Endothelial cell of umbilical vein (primary cell): ENCODE measurements at regions of chr21 and their contacts with region 1.

Region 1: GRCh38 chr21:34745557-34746255 is 76.9 kb downstream of the CLIC6 start:
- DNase-seq: peak; percentile 74
- H3K4me3 ChIP-seq: no peak overlapping the region
- H3K27ac ChIP-seq: no peak overlapping the region
- H3K4me1 ChIP-seq: no peaks in the 10 kb centered on the region
- H3K27me3 ChIP-seq: peaks cover 11 to 23% of the 10 kb centered on the region in 2 experiments
- CTCF ChIP-seq: peak; percentile 80 to 90
- POLR2A ChIP-seq: no peak

Region 2: DNA sequence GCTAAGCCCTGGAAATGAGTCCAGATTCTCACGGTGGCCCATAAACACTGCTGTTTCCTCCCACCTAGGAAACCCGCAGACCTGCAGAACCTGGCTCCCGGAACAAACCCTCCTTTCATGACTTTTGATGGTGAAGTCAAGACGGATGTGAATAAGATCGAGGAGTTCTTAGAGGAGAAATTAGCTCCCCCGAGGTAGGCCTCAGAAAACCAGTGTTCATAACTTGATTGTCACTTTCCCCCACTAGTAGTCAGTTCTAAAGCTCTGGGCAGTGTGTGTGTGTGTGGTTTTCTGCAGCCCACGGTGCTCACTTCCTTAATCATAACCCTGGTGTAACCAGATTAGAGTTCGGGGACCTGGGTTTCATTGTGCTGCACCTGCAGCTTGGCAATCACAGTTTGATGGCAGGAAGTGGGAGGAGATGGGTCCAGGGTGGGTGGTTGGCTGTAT is 37.8 kb before region 1 on chr21:
- CTCF ChIA-PET with region 1: interaction called, 10 read pairs
- POLR2A ChIA-PET with region 1: no interaction called
- dilution Hi-C with region 1: no loop called
- intact Hi-C with region 1: no loop called
- DNase-seq: no peak
- H3K4me3 ChIP-seq: no peak overlapping the region
- H3K27ac ChIP-seq: no peak overlapping the region
- H3K4me1 ChIP-seq: no peaks in the 10 kb centered on the region
- H3K27me3 ChIP-seq: peaks cover 21 to 28% of the 10 kb centered on the region in 2 experiments
- CTCF ChIP-seq: no peak
- POLR2A ChIP-seq: no peak

Region 3: GRCh38 chr21:34807146-34807880 is 61.6 kb after region 1 on chr21:
- CTCF ChIA-PET with region 1: interaction called, 15 read pairs
- POLR2A ChIA-PET with region 1: no interaction called
- dilution Hi-C with region 1: no loop called
- intact Hi-C with region 1: no loop called
- DNase-seq: peak; percentile 94
- H3K4me3 ChIP-seq: no peak overlapping the region
- H3K27ac ChIP-seq: peak overlapping the region; percentile 100
- H3K4me1 ChIP-seq: peaks cover 37% of the 10 kb centered on the region
- H3K27me3 ChIP-seq: no peaks in the 10 kb centered on the region
- CTCF ChIP-seq: no peak
- POLR2A ChIP-seq: no peak

Region 4: DNA sequence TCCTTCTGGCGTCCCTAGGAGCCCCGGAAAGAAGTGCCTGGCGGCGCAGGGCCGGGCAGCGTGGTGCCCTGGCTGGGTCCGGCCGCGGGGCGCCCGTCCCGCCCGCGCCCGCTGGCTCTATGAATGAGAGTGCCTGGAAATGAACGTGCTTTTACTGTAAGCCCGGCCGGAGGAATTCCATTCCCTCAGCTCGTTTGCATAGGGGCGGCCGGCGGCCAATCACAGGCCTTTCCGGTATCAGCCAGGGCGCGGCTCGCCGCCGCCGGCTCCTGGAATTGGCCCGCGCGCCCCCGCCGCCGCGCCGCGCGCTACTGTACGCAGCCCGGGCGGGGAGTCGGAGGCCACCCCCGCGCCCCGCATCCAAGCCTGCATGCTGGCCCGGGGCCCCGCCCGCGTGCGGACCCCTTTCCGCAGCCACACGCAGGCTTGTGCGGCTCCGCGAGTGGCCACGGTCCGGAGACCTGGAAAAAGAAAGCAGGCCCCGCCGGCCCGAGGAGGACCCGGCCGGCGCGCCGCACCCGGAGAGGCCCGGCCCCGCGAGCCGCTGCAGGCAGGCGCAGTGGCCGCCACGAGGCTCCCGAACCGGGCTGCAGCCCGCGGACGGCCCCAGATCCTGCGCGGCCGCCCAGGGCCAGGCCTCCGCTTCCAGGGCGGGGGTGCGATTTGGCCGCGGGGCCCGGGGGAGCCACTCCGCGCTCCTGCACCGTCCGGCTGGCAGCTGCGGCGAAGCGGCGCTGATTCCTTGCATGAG is 143.0 kb after region 1 on chr21:
- CTCF ChIA-PET with region 1: interaction called, 249 read pairs
- POLR2A ChIA-PET with region 1: interaction called, 16 read pairs
- dilution Hi-C with region 1: no loop called
- intact Hi-C with region 1: loop called (anchors 1 kb)
- DNase-seq: peak; percentile 91
- H3K4me3 ChIP-seq: peak overlapping the region; percentile 59 to 89 (median 80)
- H3K27ac ChIP-seq: peak overlapping the region; percentile 88
- H3K4me1 ChIP-seq: peaks cover 36% of the 10 kb centered on the region
- H3K27me3 ChIP-seq: peaks cover 21 to 36% of the 10 kb centered on the region in 2 experiments
- CTCF ChIP-seq: no peak
- POLR2A ChIP-seq: peak; percentile 99

Region 5: GRCh38 chr21:35400233-35400957 is 654.7 kb after region 1 on chr21:
- CTCF ChIA-PET with region 1: interaction called, 44 read pairs
- POLR2A ChIA-PET with region 1: no interaction called
- dilution Hi-C with region 1: no loop called
- intact Hi-C with region 1: loop called (anchors 1 kb)
- DNase-seq: peak; percentile 73
- H3K4me3 ChIP-seq: no peak overlapping the region
- H3K27ac ChIP-seq: no peak overlapping the region
- H3K4me1 ChIP-seq: peaks cover 7% of the 10 kb centered on the region
- H3K27me3 ChIP-seq: peaks cover 0 to 2% of the 10 kb centered on the region in 2 experiments
- CTCF ChIP-seq: peak; percentile 24 to 29
- POLR2A ChIP-seq: no peak

Region 6: DNA sequence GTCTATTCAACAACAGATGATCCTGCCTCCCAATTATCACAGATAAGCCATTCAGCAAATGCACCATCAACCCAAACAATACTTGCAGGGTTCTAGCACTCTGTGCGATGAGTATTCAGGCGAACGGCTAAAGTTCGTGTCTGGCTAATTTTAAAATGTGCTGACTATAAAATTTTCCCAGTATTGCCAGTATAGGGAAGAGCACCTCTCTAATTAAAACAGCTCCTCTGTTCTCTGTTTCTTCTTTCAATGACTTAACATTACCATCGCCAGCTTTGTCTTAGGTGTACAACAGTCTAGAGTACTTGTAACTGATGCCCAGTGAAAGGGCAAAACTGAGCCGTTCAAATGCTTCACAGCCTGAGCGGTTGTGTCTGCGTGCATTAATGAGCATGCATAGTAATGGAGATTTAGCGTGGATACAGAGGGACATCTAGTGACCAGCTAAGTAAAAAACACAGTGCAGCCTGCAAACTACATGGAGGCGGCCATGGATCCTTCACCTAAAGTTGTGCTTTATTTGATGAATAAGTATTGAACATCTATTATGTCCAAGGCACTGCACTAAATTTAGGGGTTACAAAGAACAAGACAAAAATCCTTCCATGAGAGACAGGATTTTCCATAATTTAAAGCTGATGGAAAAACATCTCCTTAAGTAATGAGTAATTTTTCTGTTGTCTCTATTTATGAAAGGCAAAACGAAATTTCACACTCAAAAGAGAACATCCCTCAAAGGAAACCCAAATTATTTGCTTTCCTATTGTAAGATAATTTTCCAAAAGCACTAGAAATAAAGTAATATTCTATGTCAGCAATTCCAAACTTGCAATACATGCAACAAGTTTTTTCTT is 1194.6 kb after region 1 on chr21:
- CTCF ChIA-PET with region 1: interaction called, 16 read pairs
- POLR2A ChIA-PET with region 1: no interaction called
- dilution Hi-C with region 1: no loop called
- intact Hi-C with region 1: loop called (anchors 1 kb)
- DNase-seq: peak; percentile 76
- H3K4me3 ChIP-seq: no peak overlapping the region
- H3K27ac ChIP-seq: no peak overlapping the region
- H3K4me1 ChIP-seq: no peaks in the 10 kb centered on the region
- H3K27me3 ChIP-seq: no peaks in the 10 kb centered on the region
- CTCF ChIP-seq: peak; percentile 57 to 64
- POLR2A ChIP-seq: no peak